ENCODE measurements at regions of chr2 and their contacts with region 1.

Region 1: DNA sequence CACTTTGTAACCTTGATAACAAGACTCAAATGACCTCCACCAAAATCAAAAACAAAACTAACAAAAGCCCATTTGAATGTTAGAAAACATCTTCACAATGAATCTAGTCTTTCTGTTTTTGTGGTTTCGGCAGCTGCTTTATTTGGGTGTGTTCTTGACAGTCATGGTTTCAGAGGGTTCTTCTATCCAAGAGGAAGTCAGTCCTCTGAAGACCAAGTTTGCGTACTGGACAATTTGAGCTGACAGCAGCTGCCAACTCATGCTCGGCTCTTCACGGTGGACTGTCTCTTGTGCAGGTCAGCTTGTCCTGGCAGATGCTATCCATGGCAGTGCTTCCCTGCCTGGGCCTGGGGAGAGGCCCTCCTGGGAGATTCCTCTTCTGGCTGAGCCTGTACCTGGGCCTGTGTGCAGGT is 91.0 kb downstream of the TMEM17 start:
- DNase-seq: peak in 1 of 5 donors; percentile 40
- ATAC-seq: peak in 1 of 4 donors; percentile 16
- H3K4me3 ChIP-seq: no peak overlapping the region
- H3K27ac ChIP-seq: no peak overlapping the region
- H3K4me1 ChIP-seq: peaks cover 5 to 26% (median 19%) of the 10 kb centered on the region in 12 donors
- H3K27me3 ChIP-seq: no peaks in the 10 kb centered on the region
- CTCF ChIP-seq: no peak
- POLR2A ChIP-seq: no peak

Region 2: GRCh38 chr2:61910603-61911002 is 504.4 kb before region 1 on chr2:
- intact Hi-C with region 1: loop called in 2 of 10 experiments (anchors 5 kb)
- DNase-seq: no peak
- ATAC-seq: no peak
- H3K4me3 ChIP-seq: no peak overlapping the region
- H3K27ac ChIP-seq: no peak overlapping the region
- H3K4me1 ChIP-seq: peaks cover 0 to 45% (median 17%) of the 10 kb centered on the region in 12 donors
- H3K27me3 ChIP-seq: no peaks in the 10 kb centered on the region
- CTCF ChIP-seq: peak in 4 of 12 donors; percentile 16 to 23 (median 17)
- POLR2A ChIP-seq: no peak

Region 3: GRCh38 chr2:61922714-61923113 is 492.3 kb before region 1 on chr2:
- intact Hi-C with region 1: loop called (anchors 1 to 5 kb)
- DNase-seq: no peak
- ATAC-seq: no peak
- H3K4me3 ChIP-seq: no peak overlapping the region
- H3K27ac ChIP-seq: peak overlapping the region in 6 of 12 donors; percentile 2 to 70 (median 58)
- H3K4me1 ChIP-seq: peaks cover 0 to 42% (median 12%) of the 10 kb centered on the region in 12 donors
- H3K27me3 ChIP-seq: no peaks in the 10 kb centered on the region
- CTCF ChIP-seq: no peak
- POLR2A ChIP-seq: no peak

Region 4: DNA sequence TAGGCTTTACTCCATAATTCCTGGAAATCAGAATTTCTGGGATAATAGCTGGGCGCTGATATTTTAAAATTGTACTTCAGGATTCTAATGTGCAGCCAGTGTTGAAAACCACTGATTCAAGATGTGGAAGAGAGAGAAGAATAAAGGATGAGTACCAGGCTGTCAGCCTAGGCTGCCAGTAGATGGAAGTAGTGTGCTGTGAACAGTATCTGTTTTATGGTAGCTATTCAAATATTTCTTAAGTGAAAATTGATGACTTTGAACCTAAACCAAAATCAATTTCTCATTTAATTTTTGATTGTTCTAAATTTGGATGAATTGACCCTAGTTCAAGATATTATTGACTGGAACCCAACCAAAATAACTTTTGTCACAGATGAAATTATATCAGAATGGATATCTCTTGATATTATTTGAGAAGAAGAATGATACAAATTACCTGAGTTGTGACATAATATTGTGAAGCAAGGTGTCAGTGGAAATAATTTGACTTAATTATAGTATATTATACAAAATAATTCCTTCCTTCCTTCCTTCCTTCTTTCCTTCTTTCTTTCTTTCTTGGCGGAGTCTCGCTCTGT is 421.5 kb before region 1 on chr2:
- intact Hi-C with region 1: loop called in 9 of 10 experiments (anchors 1 to 5 kb)
- DNase-seq: peak in 1 of 5 donors; percentile 19
- ATAC-seq: peak in 3 of 4 donors; percentile 67 to 83 (median 75)
- H3K4me3 ChIP-seq: no peak overlapping the region
- H3K27ac ChIP-seq: no peak overlapping the region
- H3K4me1 ChIP-seq: peaks cover 0 to 25% (median 3%) of the 10 kb centered on the region in 12 donors
- H3K27me3 ChIP-seq: no peaks in the 10 kb centered on the region
- CTCF ChIP-seq: peak; percentile 55 to 86 (median 69)
- POLR2A ChIP-seq: no peak

Region 5: DNA sequence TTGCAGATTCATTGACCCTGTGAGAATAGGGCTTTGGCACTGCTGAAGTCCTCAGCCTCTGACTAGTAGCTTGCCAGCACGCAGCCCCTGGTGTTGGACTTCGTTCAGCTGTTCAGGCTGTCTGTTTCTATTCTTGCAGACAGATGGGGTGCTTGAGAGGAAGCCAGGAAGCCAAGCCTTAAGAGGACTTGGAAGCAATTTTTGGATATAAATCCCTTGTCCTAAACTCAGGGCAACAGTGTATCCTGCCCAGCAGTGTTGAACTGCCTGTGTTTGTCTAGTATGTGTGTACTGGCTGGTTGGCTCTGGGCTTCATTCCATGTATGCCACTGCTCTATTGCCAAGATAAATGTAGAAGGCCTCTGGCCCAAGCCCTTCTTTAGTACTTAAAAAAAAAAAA is 400.9 kb before region 1 on chr2:
- intact Hi-C with region 1: no loop called
- DNase-seq: peak; percentile 74 to 88 (median 79)
- ATAC-seq: peak; percentile 98 to 99 (median 98)
- H3K4me3 ChIP-seq: no peak overlapping the region
- H3K27ac ChIP-seq: peak overlapping the region in 9 of 12 donors; percentile 24 to 74 (median 52)
- H3K4me1 ChIP-seq: peaks cover 0 to 28% (median 19%) of the 10 kb centered on the region in 12 donors
- H3K27me3 ChIP-seq: no peaks in the 10 kb centered on the region
- CTCF ChIP-seq: peak in 11 of 12 donors; percentile 10 to 68 (median 40)
- POLR2A ChIP-seq: no peak

Region 6: DNA sequence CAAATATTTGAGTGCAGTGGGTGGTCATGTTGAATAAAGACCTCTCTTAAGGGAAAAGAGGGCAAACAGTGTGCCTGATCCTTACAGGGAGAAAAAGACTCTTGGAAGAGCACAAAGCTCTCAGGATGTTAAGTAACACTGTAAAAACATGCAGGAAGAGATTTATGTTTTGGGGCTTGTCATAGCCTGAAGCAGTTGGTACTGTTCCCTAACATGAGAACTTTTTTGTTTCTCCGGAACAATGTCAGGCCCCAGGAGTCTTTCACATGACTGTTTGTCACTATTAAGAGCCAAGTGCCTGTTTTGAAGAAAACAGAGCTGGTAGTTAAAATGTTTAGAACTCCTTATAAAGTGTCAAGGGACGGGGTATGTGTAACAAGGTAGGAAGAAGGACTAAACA is 302.8 kb before region 1 on chr2:
- intact Hi-C with region 1: loop called in 1 of 10 experiments (anchors 10 kb)
- DNase-seq: no peak
- ATAC-seq: peak in 2 of 4 donors; percentile 14 to 38
- H3K4me3 ChIP-seq: no peak overlapping the region
- H3K27ac ChIP-seq: peak overlapping the region in 6 of 12 donors; percentile 1 to 49 (median 5)
- H3K4me1 ChIP-seq: peaks cover 0 to 34% (median 13%) of the 10 kb centered on the region in 12 donors
- H3K27me3 ChIP-seq: no peaks in the 10 kb centered on the region
- CTCF ChIP-seq: no peak
- POLR2A ChIP-seq: no peak

Region 7: GRCh38 chr2:62202019-62202722 is 212.9 kb before region 1 on chr2:
- intact Hi-C with region 1: loop called in 6 of 10 experiments (anchors 2 to 10 kb)
- DNase-seq: no peak
- ATAC-seq: peak in 1 of 4 donors; percentile 33
- H3K4me3 ChIP-seq: no peak overlapping the region
- H3K27ac ChIP-seq: peak overlapping the region in 4 of 12 donors; percentile 16 to 37 (median 24)
- H3K4me1 ChIP-seq: peaks cover 0 to 93% (median 66%) of the 10 kb centered on the region in 12 donors
- H3K27me3 ChIP-seq: no peaks in the 10 kb centered on the region
- CTCF ChIP-seq: no peak
- POLR2A ChIP-seq: no peak

Region 8: DNA sequence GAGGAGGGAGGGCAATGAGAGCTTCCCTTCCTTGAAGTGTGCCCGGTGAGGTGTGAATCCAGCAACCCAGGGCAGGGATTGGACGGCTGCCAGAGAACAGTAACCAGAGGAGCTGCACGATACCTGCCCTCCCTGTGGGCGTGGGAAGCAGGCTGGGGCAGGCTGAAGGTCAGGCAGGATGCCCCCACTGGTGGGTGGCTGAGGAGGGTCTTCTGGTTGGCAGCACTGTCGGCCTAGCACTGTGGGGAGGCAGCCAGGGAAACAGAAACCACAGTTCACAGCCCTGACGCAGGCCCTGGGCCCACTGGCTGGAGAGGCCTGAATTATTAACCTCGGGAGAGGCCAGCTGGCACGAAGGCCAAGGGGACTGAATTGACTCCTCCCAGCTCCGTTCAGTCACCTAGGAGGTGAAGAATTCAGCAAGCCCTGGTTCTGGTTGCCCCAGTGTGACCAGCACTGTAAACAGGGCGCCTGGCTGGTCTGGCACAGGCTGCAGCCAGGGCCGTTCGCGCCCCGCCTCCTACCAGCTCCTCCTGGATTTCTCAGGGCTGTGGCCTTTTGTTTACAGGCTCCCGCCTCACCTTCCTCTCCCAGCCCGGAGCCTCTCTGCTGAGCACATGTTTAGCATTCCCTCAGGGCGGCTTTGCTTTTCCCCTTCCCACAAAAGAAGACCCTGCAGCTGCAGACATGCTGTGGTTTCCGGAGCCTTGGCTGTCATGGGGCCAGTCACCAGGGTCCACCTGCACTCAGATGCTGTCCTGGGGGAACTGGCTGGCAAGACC is 121.3 kb before region 1 on chr2:
- intact Hi-C with region 1: loop called in 1 of 10 experiments (anchors 5 kb)
- DNase-seq: peak; percentile 45 to 73 (median 60)
- ATAC-seq: peak; percentile 53 to 84 (median 80)
- H3K4me3 ChIP-seq: peak overlapping the region in 1 of 12 donors; percentile 12
- H3K27ac ChIP-seq: peak overlapping the region in 11 of 12 donors; percentile 17 to 76 (median 54)
- H3K4me1 ChIP-seq: peaks cover 5 to 52% (median 33%) of the 10 kb centered on the region in 12 donors
- H3K27me3 ChIP-seq: no peaks in the 10 kb centered on the region
- CTCF ChIP-seq: no peak
- POLR2A ChIP-seq: no peak